ENCODE measurements at regions of chr1 and their contacts with region 1.

Region 1: GRCh38 chr1:52365746-52366516 is at the start of gene CC2D1B:
- DNase-seq: peak; percentile 96 to 99
- H3K4me3 ChIP-seq: peak within 1 kb of the TSS; percentile 90 to 94
- H3K27ac ChIP-seq: peak within 1 kb of the TSS; percentile 92 to 96
- H3K4me1 ChIP-seq: peaks cover 2 to 14% of the 10 kb centered on the region in 2 donors
- H3K27me3 ChIP-seq: no peaks in the 10 kb centered on the region
- CTCF ChIP-seq: peak in 1 of 3 experiments; percentile 34
- total RNA-seq, gene CC2D1B: 45.4 TPM

Region 2: GRCh38 chr1:51878616-51879336 is 487.2 kb before region 1 on chr1 and contains the start of gene NRDC:
- intact Hi-C with region 1: loop called (anchors 5 kb)
- DNase-seq: peak; percentile 99 to 100
- H3K4me3 ChIP-seq: peak within 1 kb of the TSS; percentile 71 to 83
- H3K27ac ChIP-seq: peak within 1 kb of the TSS; percentile 94 to 99
- H3K4me1 ChIP-seq: peaks cover 5 to 27% of the 10 kb centered on the region in 2 donors
- H3K27me3 ChIP-seq: no peaks in the 10 kb centered on the region
- CTCF ChIP-seq: no peak
- total RNA-seq, gene NRDC: 40.0 TPM

Region 3: DNA sequence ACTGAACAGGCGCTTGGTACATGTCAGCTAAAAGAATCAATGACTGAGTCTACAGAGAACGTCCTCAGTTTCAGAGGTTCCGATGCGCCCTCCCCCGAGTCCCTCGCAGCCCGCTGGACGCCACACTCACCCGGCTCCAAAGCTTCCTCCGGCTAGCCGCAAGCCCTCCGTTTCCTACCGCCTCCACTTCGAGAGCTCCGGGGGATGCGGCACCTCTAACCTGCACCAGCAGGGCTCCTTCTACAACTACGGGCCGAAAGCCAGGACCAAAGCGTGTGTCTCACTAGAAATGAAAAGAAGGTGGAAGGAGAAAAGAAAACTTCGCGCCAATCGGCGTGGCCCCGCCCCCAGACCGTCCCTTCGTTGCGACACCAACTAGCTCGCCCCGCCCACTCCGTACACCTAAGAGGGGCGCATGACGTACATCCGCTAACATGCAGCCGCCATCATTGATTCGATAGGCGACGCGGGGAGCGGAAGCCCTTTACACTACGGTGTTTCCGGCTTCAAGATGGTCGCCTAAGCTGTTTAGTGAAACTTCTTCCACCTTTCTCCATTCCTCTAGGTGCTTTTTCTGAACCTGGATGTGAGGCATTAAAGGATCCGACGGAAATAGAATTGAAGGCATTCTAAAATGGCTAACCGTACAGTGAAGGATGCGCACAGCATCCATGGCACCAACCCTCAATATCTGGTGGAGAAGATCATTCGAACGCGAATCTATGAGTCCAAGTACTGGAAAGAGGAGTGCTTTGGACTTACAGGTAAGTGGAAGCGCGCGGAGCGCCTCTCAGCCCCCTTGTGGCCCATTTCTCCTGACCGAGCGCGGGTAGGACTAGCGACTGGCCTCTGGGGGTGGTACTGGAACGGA is 38.4 kb after region 1 on chr1 and contains the starts of genes ORC1 and PRPF38A:
- intact Hi-C with region 1: loop called (anchors 1 kb)
- DNase-seq: peak; percentile 85 to 98
- H3K4me3 ChIP-seq: peak within 1 kb of the TSS; percentile 87 to 91
- H3K27ac ChIP-seq: peak within 1 kb of the TSS; percentile 85 to 96
- H3K4me1 ChIP-seq: peaks cover 10 to 15% of the 10 kb centered on the region in 2 donors
- H3K27me3 ChIP-seq: no peaks in the 10 kb centered on the region
- CTCF ChIP-seq: peak; percentile 32 to 59 (median 51)
- total RNA-seq, gene ORC1: not detected
- total RNA-seq, gene PRPF38A: 20.3 TPM

Region 4: DNA sequence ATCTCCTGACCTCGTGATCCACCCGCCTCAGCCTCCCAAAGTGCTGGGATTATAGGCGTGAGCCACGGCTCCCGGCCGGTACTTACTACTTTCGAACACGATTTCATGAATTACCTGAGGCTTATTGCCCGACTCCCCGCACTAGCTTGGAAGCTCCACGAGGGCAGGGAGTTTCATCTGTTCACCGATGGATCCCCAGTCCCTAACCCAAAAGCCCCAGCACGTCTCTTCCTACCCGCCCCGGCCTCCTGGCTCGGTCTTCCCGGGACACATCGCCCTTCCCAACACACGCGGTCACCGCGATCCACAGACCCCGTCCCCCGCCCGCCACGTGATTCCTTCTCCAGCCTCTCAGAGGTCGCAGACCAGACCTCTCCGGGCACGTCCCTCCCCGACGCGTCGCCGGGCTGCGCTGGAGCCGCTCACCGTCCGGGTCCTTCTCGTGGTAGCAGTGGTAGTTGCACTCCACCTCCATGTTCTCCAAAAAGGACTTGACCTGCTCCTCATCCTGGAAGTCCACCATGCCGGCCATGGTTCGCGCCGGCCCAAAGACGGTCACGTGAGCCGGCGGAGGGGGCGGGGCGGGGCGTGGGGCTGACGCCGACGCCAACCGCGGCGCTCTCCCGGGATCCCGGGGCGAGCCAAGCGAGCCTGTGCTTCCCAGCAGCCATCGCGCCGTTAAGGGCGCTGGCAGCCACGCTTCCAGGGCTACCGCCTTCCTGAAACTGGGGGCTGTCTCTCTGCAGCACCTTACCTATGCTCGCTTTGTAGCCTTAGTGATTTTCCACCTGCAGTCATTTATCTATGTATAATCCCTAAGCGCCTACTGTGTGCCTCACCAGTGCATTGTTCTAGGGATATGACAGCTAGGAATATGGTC is 332.1 kb after region 1 on chr1 and contains the start of gene COA7:
- intact Hi-C with region 1: loop called (anchors 5 kb)
- DNase-seq: peak; percentile 27 to 90
- H3K4me3 ChIP-seq: peak within 1 kb of the TSS; percentile 71 to 85
- H3K27ac ChIP-seq: peak within 1 kb of the TSS; percentile 78 to 85
- H3K4me1 ChIP-seq: peaks cover 0 to 3% of the 10 kb centered on the region in 2 donors
- H3K27me3 ChIP-seq: no peaks in the 10 kb centered on the region
- CTCF ChIP-seq: no peak
- total RNA-seq, gene COA7: 7.6 TPM

Region 5: DNA sequence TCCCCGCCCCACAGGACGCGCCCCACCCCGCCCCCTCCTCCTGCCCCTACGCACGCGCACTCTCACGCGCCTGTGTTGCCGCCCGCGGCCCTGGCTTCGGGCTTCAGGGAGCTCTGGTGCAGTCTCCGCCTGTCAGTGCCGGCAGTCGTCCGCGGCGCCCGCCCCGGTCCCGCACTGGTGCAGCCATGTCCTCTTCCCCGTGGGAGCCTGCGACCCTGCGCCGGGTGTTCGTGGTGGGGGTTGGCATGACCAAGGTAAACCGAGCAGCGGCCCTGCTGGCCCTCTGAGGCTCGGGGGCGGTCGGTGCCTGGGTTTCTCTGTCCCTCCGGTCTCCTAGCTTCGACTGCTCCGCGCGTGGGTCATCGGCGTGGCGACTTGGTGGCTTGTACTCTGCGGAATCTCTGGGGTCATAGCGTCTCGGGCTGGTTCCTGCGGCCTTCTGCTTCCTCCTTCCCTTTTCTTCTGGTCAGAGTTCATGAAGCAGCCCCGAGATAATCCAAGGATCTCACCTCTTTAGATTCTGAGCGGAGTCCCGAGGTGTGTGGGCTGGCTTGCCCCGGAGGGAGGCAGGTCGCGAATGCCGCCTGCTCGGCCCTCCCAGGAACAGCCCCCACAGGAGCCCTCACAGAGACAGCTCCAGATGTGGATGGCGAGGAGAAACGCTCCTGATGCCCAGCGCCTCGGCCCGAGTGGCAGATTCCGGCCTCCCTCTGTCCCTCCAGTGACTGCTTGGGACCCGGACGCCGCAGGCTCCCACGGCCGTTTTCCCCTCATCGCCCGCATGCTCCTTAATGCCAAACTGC is 561.5 kb after region 1 on chr1 and contains the start of gene SCP2:
- intact Hi-C with region 1: loop called (anchors 10 kb)
- DNase-seq: peak; percentile 33 to 91
- H3K4me3 ChIP-seq: peak within 1 kb of the TSS; percentile 50 to 73
- H3K27ac ChIP-seq: peak within 1 kb of the TSS; percentile 72 to 75
- H3K4me1 ChIP-seq: peaks cover 0 to 8% of the 10 kb centered on the region in 2 donors
- H3K27me3 ChIP-seq: no peaks in the 10 kb centered on the region
- CTCF ChIP-seq: no peak
- total RNA-seq, gene SCP2: 26.3 TPM

Region 6: DNA sequence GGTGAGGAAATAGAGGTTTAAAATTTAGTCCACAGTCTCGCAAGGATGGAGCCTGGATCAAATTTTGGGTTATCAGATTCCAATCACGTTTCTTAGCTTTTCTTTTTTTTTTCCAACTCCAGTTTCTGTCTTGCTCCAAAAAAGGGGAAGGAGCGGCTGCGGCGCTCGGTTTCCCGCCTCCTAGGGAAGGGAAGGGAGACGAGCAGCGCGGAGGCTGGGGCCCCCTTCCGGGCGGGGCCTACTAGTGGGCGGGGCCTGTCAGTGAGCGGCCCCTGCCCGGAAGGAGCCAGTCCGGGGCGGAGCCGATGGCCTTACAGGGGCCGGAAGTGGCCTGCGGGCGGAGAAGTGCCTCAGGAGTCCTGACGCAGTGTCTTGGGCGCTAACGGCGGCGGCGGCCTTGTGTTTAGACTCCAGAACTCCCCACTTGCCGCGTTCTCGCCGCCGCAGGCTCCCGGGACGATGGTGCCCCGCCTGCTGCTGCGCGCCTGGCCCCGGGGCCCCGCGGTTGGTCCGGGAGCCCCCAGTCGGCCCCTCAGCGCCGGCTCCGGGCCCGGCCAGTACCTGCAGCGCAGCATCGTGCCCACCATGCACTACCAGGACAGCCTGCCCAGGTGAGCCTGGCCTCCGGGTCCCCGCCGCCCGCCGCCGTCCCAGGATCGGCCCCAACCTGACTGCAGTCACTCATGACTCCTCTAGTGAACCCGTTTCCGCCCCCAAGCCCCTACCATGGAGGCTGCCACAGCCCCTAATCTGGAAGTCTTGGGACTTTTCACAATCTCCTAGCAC is 830.7 kb after region 1 on chr1 and contains the start of gene CPT2:
- intact Hi-C with region 1: loop called (anchors 10 kb)
- DNase-seq: peak; percentile 71 to 98
- H3K4me3 ChIP-seq: peak within 1 kb of the TSS; percentile 89 to 100
- H3K27ac ChIP-seq: peak within 1 kb of the TSS; percentile 99 to 100
- H3K4me1 ChIP-seq: peaks cover 0 to 18% of the 10 kb centered on the region in 2 donors
- H3K27me3 ChIP-seq: no peaks in the 10 kb centered on the region
- CTCF ChIP-seq: peak in 1 of 3 experiments; percentile 14
- total RNA-seq, gene CPT2: 24.8 TPM